Pancreas (tissue), 10 donors: ENCODE measurements at regions of chr6 and their contacts with region 1.

Region 1: GRCh38 chr6:72922401-72922800 is 300.5 kb downstream of the KCNQ5 start:
- DNase-seq: no peak
- ATAC-seq: no peak
- H3K4me3 ChIP-seq: no peak overlapping the region
- H3K27ac ChIP-seq: no peak overlapping the region
- H3K4me1 ChIP-seq: no peaks in the 10 kb centered on the region
- H3K27me3 ChIP-seq: no peaks in the 10 kb centered on the region
- CTCF ChIP-seq: no peak

Region 2: DNA sequence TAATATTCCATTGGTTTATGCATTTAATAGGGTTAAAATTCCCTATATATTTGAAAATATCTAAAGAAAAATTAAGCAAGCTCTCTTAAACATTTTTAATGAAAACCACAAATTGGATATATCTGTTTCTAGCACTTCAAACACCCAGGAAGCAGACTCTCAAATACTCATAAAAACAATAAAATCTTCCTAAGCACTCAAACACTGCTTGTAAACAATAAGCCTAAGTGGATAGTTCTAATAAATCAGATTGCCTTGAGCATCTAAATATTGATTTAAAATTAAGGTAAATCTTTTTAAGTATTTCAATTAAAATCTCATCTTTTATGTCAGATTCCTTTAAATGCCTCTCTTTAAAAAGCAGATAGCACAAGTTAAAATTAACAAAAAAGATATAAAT is 46.1 kb before region 1 on chr6:
- intact Hi-C with region 1: loop called in 1 of 3 experiments (anchors 5 kb)
- DNase-seq: no peak
- ATAC-seq: no peak
- H3K4me3 ChIP-seq: no peak overlapping the region
- H3K27ac ChIP-seq: no peak overlapping the region
- H3K4me1 ChIP-seq: no peaks in the 10 kb centered on the region
- H3K27me3 ChIP-seq: no peaks in the 10 kb centered on the region
- CTCF ChIP-seq: no peak